GM12878 (cell line): ENCODE measurements at regions of chr3 and their contacts with region 1.

Region 1: GRCh38 chr3:122074621-122075265 is 19.6 kb downstream of the CD86 start:
- DNase-seq: peak; percentile 92
- ATAC-seq: peak; percentile 70
- H3K4me3 ChIP-seq: peak overlapping the region; percentile 72
- H3K27ac ChIP-seq: peak overlapping the region; percentile 97
- H3K4me1 ChIP-seq: peaks cover 45% of the 10 kb centered on the region
- H3K27me3 ChIP-seq: no peaks in the 10 kb centered on the region
- CTCF ChIP-seq: no peak
- EP300 ChIP-seq: peak; percentile 65 to 76
- POLR2A ChIP-seq: peak; percentile 73
- RAD21 ChIP-seq: no peak

Region 2: GRCh38 chr3:121654493-121655385 is 420.0 kb before region 1 on chr3:
- CTCF ChIA-PET with region 1: no interaction called
- POLR2A ChIA-PET with region 1: no interaction called
- RAD21 ChIA-PET with region 1: no interaction called
- SMC1A ChIA-PET with region 1: no interaction called
- in situ Hi-C with region 1: no loop called
- intact Hi-C with region 1: loop called (anchors 10 kb)
- DNase-seq: peak; percentile 36
- ATAC-seq: peak; percentile 89
- H3K4me3 ChIP-seq: peak overlapping the region; percentile 12; the same call in 1 of the 2 replicates
- H3K27ac ChIP-seq: peak overlapping the region; percentile 68; the same call in 1 of the 2 replicates
- H3K4me1 ChIP-seq: peaks cover 34% of the 10 kb centered on the region
- H3K27me3 ChIP-seq: no peaks in the 10 kb centered on the region
- CTCF ChIP-seq: no peak
- EP300 ChIP-seq: 0 out of 4 replicates have a peak, but pooled peaks have one; percentile 16 to 21
- POLR2A ChIP-seq: no peak
- RAD21 ChIP-seq: no peak

Region 3: DNA sequence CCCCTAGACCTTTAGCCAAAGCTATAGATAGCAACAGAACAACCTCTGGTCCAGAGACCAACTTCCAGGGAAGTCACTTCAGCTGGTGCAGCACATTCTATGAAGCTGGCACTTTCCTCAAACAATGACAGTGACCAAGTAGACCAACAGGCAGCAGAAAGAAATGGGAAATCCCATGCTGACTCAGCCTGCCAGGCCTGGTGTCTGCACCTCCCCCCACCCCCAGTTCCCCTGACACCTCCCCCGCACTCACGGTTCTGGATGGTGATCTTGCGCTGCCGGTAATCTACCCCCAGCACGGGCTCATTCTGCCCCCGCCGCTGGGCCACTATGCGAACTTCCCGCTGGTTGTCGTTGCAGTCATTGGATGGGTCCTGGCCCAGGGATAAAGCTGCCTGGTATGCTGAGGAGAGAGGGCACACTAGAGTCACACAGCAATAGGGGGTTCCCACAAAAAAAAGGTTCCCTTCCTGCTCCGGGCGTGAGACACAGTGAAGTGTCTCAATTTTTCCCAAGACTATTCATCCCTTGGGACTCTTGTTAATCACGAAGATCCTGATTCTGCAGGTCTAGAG is 69.7 kb before region 1 on chr3:
- CTCF ChIA-PET with region 1: interaction called, 15 read pairs
- POLR2A ChIA-PET with region 1: interaction called, 25 read pairs
- RAD21 ChIA-PET with region 1: interaction called, 93 read pairs
- SMC1A ChIA-PET with region 1: interaction called, 882 read pairs
- in situ Hi-C with region 1: loop called (anchors 5 kb)
- intact Hi-C with region 1: loop called (anchors 2 kb)
- DNase-seq: peak; percentile 74
- ATAC-seq: peak; percentile 78
- H3K4me3 ChIP-seq: peak overlapping the region; percentile 46; the same call in 1 of the 2 replicates
- H3K27ac ChIP-seq: peak overlapping the region; percentile 91
- H3K4me1 ChIP-seq: peaks cover 58% of the 10 kb centered on the region
- H3K27me3 ChIP-seq: no peaks in the 10 kb centered on the region
- CTCF ChIP-seq: 0 out of 6 replicates have a peak, but pooled peaks of 1 of the 3 experiments have one; percentile 3
- EP300 ChIP-seq: peak; percentile 11 to 65; a peak in 3 of 4 replicates
- POLR2A ChIP-seq: 0 out of 2 replicates have a peak, but pooled peaks have one; percentile 35
- RAD21 ChIP-seq: no peak

Region 4: DNA sequence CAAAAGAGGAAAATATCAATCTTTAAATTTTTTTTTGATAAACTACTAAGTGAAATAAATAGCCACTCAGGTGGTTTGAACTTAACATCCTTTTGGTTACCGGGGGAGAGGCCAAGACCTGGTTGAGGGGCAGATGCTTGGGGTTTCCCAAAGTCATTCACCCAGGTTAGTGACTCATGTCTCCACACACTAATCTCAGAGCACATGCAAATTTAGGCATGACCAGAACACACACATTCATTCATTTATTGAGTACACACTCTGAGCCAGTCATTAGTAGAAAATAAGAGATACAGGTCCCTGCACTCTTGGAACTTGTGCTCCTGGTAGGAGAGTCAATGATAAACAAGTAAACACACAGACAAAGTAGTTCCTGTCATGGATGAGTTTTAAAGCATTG is 60.0 kb before region 1 on chr3:
- CTCF ChIA-PET with region 1: interaction called, 25 read pairs
- POLR2A ChIA-PET with region 1: interaction called, 67 read pairs
- RAD21 ChIA-PET with region 1: interaction called, 180 read pairs
- SMC1A ChIA-PET with region 1: interaction called, 882 read pairs
- in situ Hi-C with region 1: no loop called
- intact Hi-C with region 1: no loop called
- DNase-seq: peak; percentile 91
- ATAC-seq: peak; percentile 80
- H3K4me3 ChIP-seq: peak overlapping the region; percentile 18; the same call in 1 of the 2 replicates
- H3K27ac ChIP-seq: peak overlapping the region; percentile 60
- H3K4me1 ChIP-seq: peaks cover 72% of the 10 kb centered on the region
- H3K27me3 ChIP-seq: no peaks in the 10 kb centered on the region
- CTCF ChIP-seq: no peak
- EP300 ChIP-seq: peak; percentile 81 to 86; a peak in 3 of 4 replicates
- POLR2A ChIP-seq: no peak
- RAD21 ChIP-seq: no peak

Region 5: GRCh38 chr3:122021811-122022401 is 52.8 kb before region 1 on chr3 and contains the start of gene ILDR1:
- CTCF ChIA-PET with region 1: interaction called, 11 read pairs
- POLR2A ChIA-PET with region 1: interaction called, 67 read pairs
- RAD21 ChIA-PET with region 1: interaction called, 180 read pairs
- SMC1A ChIA-PET with region 1: interaction called, 233 read pairs
- in situ Hi-C with region 1: no loop called
- intact Hi-C with region 1: no loop called
- DNase-seq: no peak
- ATAC-seq: peak; percentile 55
- H3K4me3 ChIP-seq: peak within 1 kb of the TSS; percentile 72
- H3K27ac ChIP-seq: peak within 1 kb of the TSS; percentile 65
- H3K4me1 ChIP-seq: peaks cover 49% of the 10 kb centered on the region
- H3K27me3 ChIP-seq: no peaks in the 10 kb centered on the region
- CTCF ChIP-seq: no peak
- EP300 ChIP-seq: no peak
- POLR2A ChIP-seq: peak; percentile 60; the same call in 1 of the 2 replicates
- RAD21 ChIP-seq: no peak
- polyA plus RNA-seq, gene ILDR1: 1.3 to 1.8 TPM

Region 6: DNA sequence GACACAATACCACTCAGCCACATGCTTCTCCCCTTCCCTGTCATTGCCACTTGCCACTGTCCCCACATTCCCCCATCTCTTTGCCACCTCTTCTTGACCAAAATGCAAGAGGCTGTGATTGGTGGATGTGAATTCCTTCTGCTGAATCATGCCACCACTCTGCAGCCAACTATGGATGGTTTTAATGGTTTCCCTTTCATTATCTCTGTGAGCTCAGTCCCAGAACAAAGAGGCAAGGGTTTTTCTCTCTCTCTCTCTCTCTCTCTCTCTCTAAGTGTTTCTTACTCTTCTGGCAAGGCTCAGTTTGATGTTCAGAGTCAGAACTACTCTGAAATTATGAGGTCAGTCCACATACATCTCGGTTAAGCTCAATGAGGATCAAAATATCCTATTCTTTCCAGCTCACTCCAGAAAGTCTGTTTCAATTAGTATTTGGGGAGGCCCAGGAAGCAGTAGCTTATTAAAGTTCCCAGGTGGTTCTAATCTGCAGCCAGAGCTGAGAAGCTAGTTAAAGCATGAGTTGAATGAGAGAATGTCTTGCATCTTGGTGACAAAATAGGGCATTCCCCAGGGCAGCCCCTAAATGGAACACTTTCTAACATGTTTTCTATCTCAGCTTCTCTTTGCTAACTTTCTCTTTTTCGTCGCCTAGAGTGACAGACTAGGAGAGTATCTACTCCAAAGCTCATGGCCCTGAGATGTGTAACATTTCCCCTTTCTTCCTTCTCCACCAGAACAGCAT is 44.2 kb before region 1 on chr3:
- CTCF ChIA-PET with region 1: interaction called, 7 read pairs
- POLR2A ChIA-PET with region 1: interaction called, 9 read pairs
- RAD21 ChIA-PET with region 1: interaction called, 180 read pairs
- SMC1A ChIA-PET with region 1: interaction called, 233 read pairs
- in situ Hi-C with region 1: no loop called
- intact Hi-C with region 1: loop called (anchors 2 kb)
- DNase-seq: peak; percentile 74
- ATAC-seq: peak; percentile 86
- H3K4me3 ChIP-seq: peak overlapping the region; percentile 41; the same call in 1 of the 2 replicates
- H3K27ac ChIP-seq: peak overlapping the region; percentile 89
- H3K4me1 ChIP-seq: peaks cover 37% of the 10 kb centered on the region
- H3K27me3 ChIP-seq: no peaks in the 10 kb centered on the region
- CTCF ChIP-seq: no peak
- EP300 ChIP-seq: no peak
- POLR2A ChIP-seq: 0 out of 2 replicates have a peak, but pooled peaks have one; percentile 25
- RAD21 ChIP-seq: peak; percentile 11; the same call in 1 of the 2 replicates

Region 7: DNA sequence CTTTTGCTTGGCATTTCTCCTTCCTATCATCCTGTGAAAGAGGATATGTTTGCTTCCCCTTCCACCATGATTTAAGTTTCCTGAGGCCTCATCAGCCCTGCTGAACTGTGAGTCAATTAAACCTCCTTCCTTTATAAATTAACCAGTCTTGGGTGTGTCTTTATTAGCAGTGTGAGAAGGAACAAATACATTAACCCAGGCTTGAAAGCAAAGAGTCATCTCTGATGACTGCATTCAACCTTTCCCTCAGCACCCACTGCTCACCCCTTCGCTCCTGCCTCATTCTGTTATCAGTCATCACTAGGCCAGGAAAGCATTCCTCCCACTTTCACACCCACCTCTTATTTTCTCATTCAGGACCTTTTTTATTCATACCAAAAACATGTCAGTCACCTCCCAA is 49.1 kb after region 1 on chr3:
- CTCF ChIA-PET with region 1: no interaction called
- POLR2A ChIA-PET with region 1: no interaction called
- RAD21 ChIA-PET with region 1: no interaction called
- SMC1A ChIA-PET with region 1: no interaction called
- in situ Hi-C with region 1: no loop called
- intact Hi-C with region 1: no loop called
- DNase-seq: no peak
- ATAC-seq: no peak
- H3K4me3 ChIP-seq: no peak overlapping the region
- H3K27ac ChIP-seq: no peak overlapping the region
- H3K4me1 ChIP-seq: no peaks in the 10 kb centered on the region
- H3K27me3 ChIP-seq: no peaks in the 10 kb centered on the region
- CTCF ChIP-seq: no peak
- EP300 ChIP-seq: no peak
- POLR2A ChIP-seq: no peak
- RAD21 ChIP-seq: no peak